ENCODE measurements at regions of chr5 and their contacts with region 1.

Region 1: GRCh38 chr5:31809050-31809870 is 170.3 kb downstream of the PDZD2 start:
- DNase-seq: peak; percentile 74 to 92 (median 86)
- H3K4me3 ChIP-seq: peak overlapping the region in 44 of 59 donors; percentile 5 to 60 (median 36)
- H3K27ac ChIP-seq: peak overlapping the region in 25 of 59 donors; percentile 9 to 72 (median 35)
- H3K27me3 ChIP-seq: no peaks in the 10 kb centered on the region
- CTCF ChIP-seq: peak; percentile 60 to 95 (median 88)

Region 2: DNA sequence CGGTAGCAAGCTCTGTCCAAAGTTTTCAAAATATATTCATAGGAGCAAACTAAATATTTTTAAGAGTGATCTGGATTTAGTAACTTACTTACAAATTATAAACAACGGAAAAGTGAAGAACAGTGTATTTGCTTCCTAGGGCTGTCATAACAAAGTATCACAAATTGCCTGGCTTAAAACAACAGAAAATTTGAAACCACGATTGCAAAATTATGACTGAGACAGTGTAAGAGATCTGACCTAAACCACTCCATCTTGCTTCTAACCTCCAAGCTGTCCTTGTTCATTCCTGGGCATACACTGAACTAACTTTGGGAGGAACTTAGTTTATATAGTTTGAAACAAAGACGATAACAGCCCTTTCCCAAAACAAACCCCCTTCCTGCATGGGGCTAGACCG is 817.8 kb before region 1 on chr5:
- intact Hi-C with region 1: no loop called
- DNase-seq: no peak
- H3K4me3 ChIP-seq: no peak overlapping the region
- H3K27ac ChIP-seq: no peak overlapping the region
- H3K27me3 ChIP-seq: no peaks in the 10 kb centered on the region
- CTCF ChIP-seq: no peak

Region 3: DNA sequence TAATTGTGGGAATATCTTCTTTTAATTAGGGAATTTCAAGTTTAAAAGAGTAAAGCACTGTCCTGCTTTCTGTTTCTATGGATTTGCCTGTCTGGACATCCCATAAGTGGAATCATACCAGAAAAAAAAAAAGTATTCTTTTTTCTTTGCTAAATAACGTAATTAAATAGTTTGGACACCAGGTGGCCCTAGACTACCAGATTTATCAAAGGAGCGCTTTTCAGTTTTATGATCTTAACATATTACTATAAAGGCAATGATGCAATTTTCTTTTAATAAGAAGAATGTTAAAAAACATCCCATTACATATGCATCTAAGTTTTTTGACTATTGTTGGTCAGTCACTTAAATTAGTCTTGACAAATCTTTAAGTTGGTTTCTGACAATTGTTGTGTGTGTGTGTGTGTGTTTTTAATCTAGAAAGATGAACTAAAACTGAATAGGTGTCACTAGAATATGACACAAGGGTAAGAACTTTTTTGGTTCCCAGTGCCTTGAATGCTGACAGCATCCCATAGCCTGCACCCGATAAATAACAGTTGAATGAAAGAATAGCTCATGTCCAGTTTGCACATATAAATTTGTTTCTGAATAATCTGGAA is 227.7 kb before region 1 on chr5:
- intact Hi-C with region 1: loop called (anchors 1 to 5 kb)
- DNase-seq: no peak
- H3K4me3 ChIP-seq: no peak overlapping the region
- H3K27ac ChIP-seq: no peak overlapping the region
- H3K27me3 ChIP-seq: no peaks in the 10 kb centered on the region
- CTCF ChIP-seq: peak; percentile 54 to 90 (median 70)

Region 4: GRCh38 chr5:31638748-31639418 is 170.4 kb before region 1 on chr5 and contains the start of gene PDZD2:
- intact Hi-C with region 1: loop called (anchors 1 to 5 kb)
- DNase-seq: peak; percentile 62 to 92 (median 84)
- H3K4me3 ChIP-seq: peak within 1 kb of the TSS; percentile 59 to 86 (median 73)
- H3K27ac ChIP-seq: peak within 1 kb of the TSS; percentile 27 to 89 (median 74)
- H3K27me3 ChIP-seq: no peaks in the 10 kb centered on the region
- CTCF ChIP-seq: peak in 53 of 56 donors; percentile 10 to 73 (median 51)
- total RNA-seq, gene PDZD2: 40.2 to 232 (median 105) TPM

Region 5: GRCh38 chr5:31733371-31733770 is 75.9 kb before region 1 on chr5:
- intact Hi-C with region 1: loop called in 1 of 2 experiments (anchors 2 kb)
- DNase-seq: peak; percentile 23 to 85 (median 71)
- H3K4me3 ChIP-seq: peak overlapping the region in 21 of 59 donors; percentile 2 to 43 (median 17)
- H3K27ac ChIP-seq: peak overlapping the region; percentile 46 to 94 (median 83)
- H3K27me3 ChIP-seq: no peaks in the 10 kb centered on the region
- CTCF ChIP-seq: peak in 14 of 56 donors; percentile 11 to 38 (median 20)

Region 6: DNA sequence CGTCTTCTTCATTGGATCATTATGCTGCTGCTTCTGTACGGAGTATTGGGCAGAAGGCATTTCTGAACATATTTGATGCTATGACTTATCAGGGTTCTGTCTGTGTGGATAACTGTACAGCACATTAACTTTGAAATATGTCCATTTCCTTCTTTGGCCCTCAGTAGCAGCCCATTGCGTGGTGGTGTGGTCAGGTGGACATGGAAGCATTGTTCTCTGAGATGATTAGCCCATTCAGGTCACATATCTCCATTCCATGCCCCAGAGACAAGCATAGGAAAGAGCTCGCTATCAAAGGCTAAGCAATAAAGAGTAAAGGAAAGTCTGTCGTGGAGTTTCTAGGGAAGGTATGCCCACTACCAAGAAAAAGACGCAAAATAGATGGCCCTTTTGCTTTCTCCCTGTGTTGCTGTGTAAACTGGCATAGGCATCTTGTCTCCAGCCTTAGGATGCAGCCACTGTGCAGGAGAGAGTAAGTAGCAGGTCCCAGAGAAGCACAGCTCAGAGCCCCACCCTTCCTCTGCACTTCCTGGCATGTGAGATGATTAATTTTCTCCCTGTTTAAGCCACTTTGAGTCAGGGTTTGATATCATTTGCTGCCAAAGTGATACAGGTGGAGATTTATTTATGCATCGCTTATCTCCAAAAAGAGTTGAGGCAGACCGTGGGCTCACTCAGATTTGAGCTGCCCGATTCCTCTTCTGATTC is 51.6 kb after region 1 on chr5:
- intact Hi-C with region 1: no loop called
- DNase-seq: no peak
- H3K4me3 ChIP-seq: no peak overlapping the region
- H3K27ac ChIP-seq: peak overlapping the region in 12 of 59 donors; percentile 6 to 57 (median 28)
- H3K27me3 ChIP-seq: no peaks in the 10 kb centered on the region
- CTCF ChIP-seq: no peak

Measured in dorsolateral prefrontal cortex (tissue), 120 donors.